ENCODE measurements at regions of chr4 and their contacts with region 1.

Region 1: GRCh38 chr4:169485791-169486742 is 126.3 kb downstream of the NEK1 start:
- DNase-seq: peak in 3 of 6 donors; percentile 4 to 54 (median 18)
- ATAC-seq: peak; percentile 66 to 90 (median 88)
- H3K4me3 ChIP-seq: no peak overlapping the region
- H3K27ac ChIP-seq: no peak overlapping the region
- H3K4me1 ChIP-seq: peaks cover 0 to 5% (median 0%) of the 10 kb centered on the region in 3 donors
- H3K27me3 ChIP-seq: no peaks in the 10 kb centered on the region
- CTCF ChIP-seq: peak in 3 of 4 donors; percentile 25 to 29 (median 28)

Region 2: DNA sequence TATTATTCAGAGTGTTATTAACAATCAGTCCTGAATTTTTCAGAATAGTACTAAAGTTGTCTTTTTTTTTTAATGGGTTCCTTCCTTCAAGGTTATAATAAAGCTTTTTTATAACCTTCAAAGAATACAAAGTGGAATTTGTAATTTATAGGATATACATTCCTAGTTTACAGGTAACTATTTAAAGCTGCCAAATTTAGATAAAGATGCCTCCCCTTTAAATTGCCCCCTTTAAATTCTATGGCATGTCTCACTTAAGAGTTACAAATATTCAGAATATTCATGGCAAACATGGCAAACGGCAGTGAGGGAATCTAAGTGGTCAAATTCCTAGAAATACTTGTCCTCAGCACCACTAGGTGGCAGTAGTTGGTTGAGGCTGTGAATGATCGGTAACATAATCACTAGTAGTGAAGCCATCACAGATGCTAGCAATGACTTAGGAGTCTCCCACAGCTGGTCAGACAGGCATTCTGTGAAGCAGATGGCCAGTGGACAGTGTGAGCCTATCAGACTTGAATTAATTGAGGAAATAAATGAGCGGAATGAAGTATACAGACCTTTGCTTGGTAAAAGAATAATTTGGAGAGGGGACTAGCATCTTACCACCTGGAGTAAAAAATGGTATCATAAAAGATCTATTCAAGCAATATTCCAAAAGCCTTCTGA is 562.4 kb before region 1 on chr4:
- intact Hi-C with region 1: loop called in 1 of 3 experiments (anchors 10 kb)
- DNase-seq: peak in 4 of 6 donors; percentile 35 to 70 (median 56)
- ATAC-seq: peak; percentile 71 to 97 (median 92)
- H3K4me3 ChIP-seq: no peak overlapping the region
- H3K27ac ChIP-seq: no peak overlapping the region
- H3K4me1 ChIP-seq: no peaks in the 10 kb centered on the region
- H3K27me3 ChIP-seq: no peaks in the 10 kb centered on the region
- CTCF ChIP-seq: peak; percentile 47 to 72 (median 60)

Region 3: DNA sequence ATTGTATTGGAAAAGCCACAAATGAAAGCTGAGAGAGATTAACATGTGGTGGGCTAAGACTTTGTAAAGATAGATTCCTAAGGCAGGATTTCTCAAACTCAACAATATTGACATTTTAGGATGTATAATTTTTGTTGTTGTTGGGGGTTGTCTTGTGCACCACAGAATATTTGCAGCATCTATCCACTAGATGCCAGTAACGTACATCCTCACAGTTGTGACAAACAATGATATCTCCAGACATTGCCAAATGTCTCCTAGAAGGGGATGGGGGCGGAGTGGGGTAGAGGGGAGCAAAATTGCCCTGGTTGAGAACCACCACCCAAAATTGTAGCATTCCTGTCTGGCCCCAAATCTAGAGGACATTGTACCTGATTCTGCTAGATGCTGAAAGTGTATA is 461.3 kb before region 1 on chr4:
- intact Hi-C with region 1: loop called in 1 of 3 experiments (anchors 10 kb)
- DNase-seq: no peak
- ATAC-seq: peak in 3 of 4 donors; percentile 83 to 88 (median 86)
- H3K4me3 ChIP-seq: no peak overlapping the region
- H3K27ac ChIP-seq: no peak overlapping the region
- H3K4me1 ChIP-seq: no peaks in the 10 kb centered on the region
- H3K27me3 ChIP-seq: no peaks in the 10 kb centered on the region
- CTCF ChIP-seq: peak in 3 of 4 donors; percentile 30 to 40 (median 34)